HCT116 (cell line): ENCODE measurements at regions of chr2 and their contacts with region 1.

Region 1: GRCh38 chr2:203814661-203815540 is 52.7 kb upstream of the CTLA4 start:
- DNase-seq: peak; percentile 50
- ATAC-seq: peak; percentile 85
- H3K4me3 ChIP-seq: 0 out of 4 replicates have a peak overlapping the region, but pooled peaks of 1 of the 2 experiments have one; percentile 10
- H3K27ac ChIP-seq: no peak overlapping the region
- H3K4me1 ChIP-seq: peaks cover 4 to 20% of the 10 kb centered on the region in 2 experiments; a peak in 3 of 4 replicates
- H3K27me3 ChIP-seq: no peaks in the 10 kb centered on the region
- CTCF ChIP-seq: peak; percentile 66 to 80 (median 74)
- POLR2A ChIP-seq: no peak
- RAD21 ChIP-seq: peak; percentile 95

Region 2: GRCh38 chr2:202577250-202578183 is 1237.4 kb before region 1 on chr2:
- CTCF ChIA-PET with region 1: interaction called, 8 read pairs
- POLR2A ChIA-PET with region 1: no interaction called
- RAD21 ChIA-PET with region 1: interaction called in 1 of 2 experiments, 3 read pairs
- intact Hi-C with region 1: loop called (anchors 1 kb)
- DNase-seq: no peak
- ATAC-seq: no peak
- H3K4me3 ChIP-seq: no peak overlapping the region
- H3K27ac ChIP-seq: no peak overlapping the region
- H3K4me1 ChIP-seq: no peaks in the 10 kb centered on the region
- H3K27me3 ChIP-seq: no peaks in the 10 kb centered on the region
- CTCF ChIP-seq: no peak
- POLR2A ChIP-seq: no peak
- RAD21 ChIP-seq: no peak

Region 3: DNA sequence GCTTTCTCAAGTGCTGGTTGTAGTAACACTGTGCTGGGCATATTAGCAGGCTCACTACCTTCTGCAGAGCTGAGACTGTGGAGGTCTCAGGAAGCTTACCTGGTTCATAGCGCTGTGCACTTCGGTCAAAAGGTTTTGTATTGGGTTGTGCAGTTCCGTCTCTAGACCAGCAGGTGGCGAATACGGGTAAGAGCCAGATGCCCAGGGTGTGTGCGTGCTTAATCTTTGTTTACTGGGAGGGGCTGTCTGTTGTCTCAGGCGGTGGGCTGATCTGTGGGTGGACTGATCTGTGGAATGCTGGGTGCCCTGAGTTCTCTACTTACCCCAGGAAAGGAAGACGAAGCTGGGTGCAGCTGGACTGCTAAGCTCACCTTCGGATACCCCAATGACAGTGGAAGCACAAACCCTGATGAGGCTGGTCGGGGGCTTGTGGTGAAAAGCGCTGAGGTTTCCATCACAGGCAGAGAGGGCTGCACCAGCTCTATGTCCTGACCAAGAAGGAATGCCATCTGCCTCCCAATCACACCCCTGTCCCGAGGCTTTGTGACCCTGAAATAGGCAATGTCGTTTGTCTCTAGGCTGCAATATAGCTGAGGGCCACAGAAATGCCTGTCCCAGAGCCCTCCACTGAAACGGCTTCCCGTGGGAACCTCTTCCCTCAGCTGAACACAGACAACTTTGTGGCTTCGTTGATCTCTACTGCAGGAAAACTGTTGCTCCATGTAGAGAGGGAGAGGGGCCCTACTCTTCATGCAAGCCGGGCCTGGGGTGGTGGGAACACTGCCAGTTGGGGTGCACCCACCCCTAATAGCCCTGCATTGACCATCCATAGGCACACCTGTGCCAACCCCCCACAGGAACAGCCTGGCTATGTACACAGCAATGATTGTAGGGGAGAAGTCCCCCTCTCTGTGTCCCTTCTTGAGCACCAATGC is 1226.0 kb before region 1 on chr2:
- CTCF ChIA-PET with region 1: interaction called, 22 read pairs
- POLR2A ChIA-PET with region 1: no interaction called
- RAD21 ChIA-PET with region 1: no interaction called
- intact Hi-C with region 1: loop called (anchors 1 kb)
- DNase-seq: peak; percentile 64
- ATAC-seq: peak; percentile 97
- H3K4me3 ChIP-seq: no peak overlapping the region
- H3K27ac ChIP-seq: no peak overlapping the region
- H3K4me1 ChIP-seq: peaks cover 0 to 9% of the 10 kb centered on the region in 2 experiments; a peak in 2 of 4 replicates
- H3K27me3 ChIP-seq: no peaks in the 10 kb centered on the region
- CTCF ChIP-seq: peak; percentile 83 to 94 (median 89)
- POLR2A ChIP-seq: no peak
- RAD21 ChIP-seq: peak; percentile 91

Region 4: GRCh38 chr2:202831242-202832220 is 983.4 kb before region 1 on chr2:
- CTCF ChIA-PET with region 1: interaction called, 3 read pairs
- POLR2A ChIA-PET with region 1: no interaction called
- RAD21 ChIA-PET with region 1: no interaction called
- intact Hi-C with region 1: loop called (anchors 2 kb)
- DNase-seq: peak; percentile 61
- ATAC-seq: peak; percentile 98
- H3K4me3 ChIP-seq: peak overlapping the region in 1 of 2 experiments; percentile 9; a peak in 1 of 4 replicates
- H3K27ac ChIP-seq: no peak overlapping the region
- H3K4me1 ChIP-seq: peaks cover 3 to 10% of the 10 kb centered on the region in 2 experiments; a peak in 3 of 4 replicates
- H3K27me3 ChIP-seq: no peaks in the 10 kb centered on the region
- CTCF ChIP-seq: peak; percentile 79 to 89 (median 82)
- POLR2A ChIP-seq: no peak
- RAD21 ChIP-seq: peak; percentile 96

Region 5: DNA sequence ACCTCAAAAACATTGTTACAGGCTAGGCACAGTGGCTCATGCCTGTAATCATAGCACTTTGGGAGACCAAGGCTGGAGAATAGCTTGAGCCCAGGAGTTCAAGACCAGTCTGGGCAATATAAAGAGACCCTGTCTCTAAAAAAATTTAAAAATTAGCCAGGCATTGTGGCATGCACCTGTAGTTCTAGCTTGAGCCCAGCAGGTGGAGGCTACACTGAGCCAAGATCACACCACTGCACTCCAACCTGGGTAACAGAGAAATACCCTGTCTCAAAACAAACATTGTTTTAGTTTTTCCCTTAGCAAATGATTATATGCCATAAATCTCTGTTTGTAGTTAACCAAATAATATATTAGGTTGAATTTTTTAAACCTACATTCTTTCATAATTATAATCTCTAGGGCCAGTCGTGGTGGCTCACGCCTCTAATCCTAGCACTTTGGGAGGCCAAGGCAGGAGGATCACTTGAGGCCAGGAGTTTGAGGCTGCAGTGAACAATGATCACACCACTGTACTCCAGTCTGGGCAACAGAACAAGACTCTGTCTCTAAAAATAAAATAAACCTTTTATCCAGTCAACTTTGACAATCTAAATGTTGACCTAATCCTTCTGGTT is 589.4 kb before region 1 on chr2:
- CTCF ChIA-PET with region 1: interaction called, 8 read pairs
- POLR2A ChIA-PET with region 1: no interaction called
- RAD21 ChIA-PET with region 1: no interaction called
- intact Hi-C with region 1: loop called (anchors 5 kb)
- DNase-seq: peak; percentile 13
- ATAC-seq: peak; percentile 90
- H3K4me3 ChIP-seq: no peak overlapping the region
- H3K27ac ChIP-seq: no peak overlapping the region
- H3K4me1 ChIP-seq: no peaks in the 10 kb centered on the region
- H3K27me3 ChIP-seq: no peaks in the 10 kb centered on the region
- CTCF ChIP-seq: peak; percentile 56 to 82 (median 79); a peak in 5 of 6 replicates
- POLR2A ChIP-seq: no peak
- RAD21 ChIP-seq: peak; percentile 70

Region 6: DNA sequence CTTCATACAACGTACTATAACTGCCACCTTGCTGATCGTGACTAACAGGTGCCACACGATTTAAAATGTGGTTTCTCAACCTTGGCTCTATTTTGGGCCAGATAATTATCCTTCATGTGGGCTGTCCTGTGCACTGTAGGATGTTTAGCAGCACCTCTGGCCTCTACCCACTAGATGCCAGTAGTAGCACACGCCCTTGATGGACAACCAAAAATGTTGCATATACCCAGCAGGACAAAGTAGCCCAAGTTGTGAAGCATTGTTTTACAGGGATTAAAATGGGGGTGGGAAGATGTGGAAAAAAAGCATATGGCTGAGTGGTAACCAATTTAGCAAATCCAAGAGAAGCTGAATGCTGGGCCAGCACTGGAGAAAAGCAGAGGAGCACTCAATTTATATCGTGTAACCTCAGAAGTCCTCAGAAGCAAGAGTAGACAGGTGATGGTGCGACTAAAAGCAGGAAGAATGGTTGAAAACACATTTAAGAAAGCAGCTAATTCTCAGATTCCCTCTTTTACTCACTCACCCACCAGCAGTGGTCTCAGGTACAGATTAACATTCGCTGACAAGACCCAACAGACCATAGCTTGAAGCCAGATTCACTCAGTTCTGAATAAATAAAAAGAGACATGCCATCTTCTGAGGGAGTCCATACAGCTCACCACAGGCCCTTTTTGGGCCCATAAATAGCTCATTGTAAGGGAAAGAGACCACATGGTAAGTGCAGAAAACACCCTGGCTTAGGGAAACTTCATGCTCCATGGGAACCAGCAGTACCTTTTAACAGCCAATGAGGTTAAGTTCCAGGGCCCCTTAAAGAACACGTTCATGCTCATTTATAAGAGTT is 330.4 kb before region 1 on chr2:
- CTCF ChIA-PET with region 1: interaction called, 8 read pairs
- POLR2A ChIA-PET with region 1: no interaction called
- RAD21 ChIA-PET with region 1: interaction called in 1 of 2 experiments, 3 read pairs
- intact Hi-C with region 1: loop called (anchors 1 kb)
- DNase-seq: no peak
- ATAC-seq: peak; percentile 89
- H3K4me3 ChIP-seq: no peak overlapping the region
- H3K27ac ChIP-seq: no peak overlapping the region
- H3K4me1 ChIP-seq: no peaks in the 10 kb centered on the region
- H3K27me3 ChIP-seq: no peaks in the 10 kb centered on the region
- CTCF ChIP-seq: peak; percentile 62 to 71 (median 67); a peak in 5 of 6 replicates
- POLR2A ChIP-seq: no peak
- RAD21 ChIP-seq: peak; percentile 90

Region 7: DNA sequence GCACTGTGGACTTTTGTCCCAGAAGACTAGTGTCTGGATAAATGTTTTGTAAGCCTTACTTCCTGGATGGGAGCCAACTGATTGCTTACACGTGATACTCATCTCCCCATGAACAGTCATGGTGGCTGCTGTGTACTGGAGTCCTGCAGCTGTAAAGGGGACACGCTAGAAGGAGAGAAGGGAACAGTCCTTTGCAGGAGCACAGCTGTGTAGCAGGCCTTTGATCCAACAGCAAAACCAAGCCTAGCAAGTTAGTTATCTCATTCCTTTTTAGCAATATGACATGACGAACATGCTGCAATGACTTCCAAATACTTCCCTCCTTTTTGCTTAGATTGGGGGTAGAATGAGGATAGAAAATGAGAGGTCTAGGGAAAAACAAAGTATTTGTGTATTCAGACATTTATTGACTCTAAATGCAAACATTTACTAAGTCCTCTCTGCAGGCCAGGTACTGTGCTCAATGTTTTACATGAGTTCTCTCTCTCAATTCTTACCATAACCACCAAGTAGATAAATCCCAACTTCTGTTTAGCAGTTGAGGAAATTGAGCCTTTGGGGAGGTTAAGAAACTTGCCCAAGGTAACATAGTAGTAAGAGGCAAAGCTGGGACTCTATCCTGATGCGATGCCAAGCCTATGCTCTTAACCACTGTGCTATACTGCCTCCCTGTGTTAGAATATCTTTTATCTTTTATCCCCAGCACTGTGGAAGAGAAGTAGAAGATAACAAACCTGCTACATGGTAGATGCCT is 163.9 kb before region 1 on chr2:
- CTCF ChIA-PET with region 1: interaction called, 4 read pairs
- POLR2A ChIA-PET with region 1: no interaction called
- RAD21 ChIA-PET with region 1: interaction called in 1 of 2 experiments, 3 read pairs
- intact Hi-C with region 1: loop called (anchors 1 kb)
- DNase-seq: peak; percentile 37
- ATAC-seq: peak; percentile 88
- H3K4me3 ChIP-seq: no peak overlapping the region
- H3K27ac ChIP-seq: no peak overlapping the region
- H3K4me1 ChIP-seq: peaks cover 0 to 9% of the 10 kb centered on the region in 2 experiments; a peak in 3 of 4 replicates
- H3K27me3 ChIP-seq: no peaks in the 10 kb centered on the region
- CTCF ChIP-seq: peak; percentile 14 to 74 (median 60); a peak in 5 of 6 replicates
- POLR2A ChIP-seq: no peak
- RAD21 ChIP-seq: peak; percentile 90

Region 8: GRCh38 chr2:204205538-204205937 is 390.6 kb after region 1 on chr2:
- CTCF ChIA-PET with region 1: no interaction called
- POLR2A ChIA-PET with region 1: no interaction called
- RAD21 ChIA-PET with region 1: no interaction called
- intact Hi-C with region 1: no loop called
- DNase-seq: no peak
- ATAC-seq: no peak
- H3K4me3 ChIP-seq: no peak overlapping the region
- H3K27ac ChIP-seq: no peak overlapping the region
- H3K4me1 ChIP-seq: no peaks in the 10 kb centered on the region
- H3K27me3 ChIP-seq: no peaks in the 10 kb centered on the region; the same call in 1 of the 2 replicates
- CTCF ChIP-seq: no peak
- POLR2A ChIP-seq: no peak
- RAD21 ChIP-seq: no peak